ENCODE measurements at regions of chrX and their contacts with region 1.

Region 1: DNA sequence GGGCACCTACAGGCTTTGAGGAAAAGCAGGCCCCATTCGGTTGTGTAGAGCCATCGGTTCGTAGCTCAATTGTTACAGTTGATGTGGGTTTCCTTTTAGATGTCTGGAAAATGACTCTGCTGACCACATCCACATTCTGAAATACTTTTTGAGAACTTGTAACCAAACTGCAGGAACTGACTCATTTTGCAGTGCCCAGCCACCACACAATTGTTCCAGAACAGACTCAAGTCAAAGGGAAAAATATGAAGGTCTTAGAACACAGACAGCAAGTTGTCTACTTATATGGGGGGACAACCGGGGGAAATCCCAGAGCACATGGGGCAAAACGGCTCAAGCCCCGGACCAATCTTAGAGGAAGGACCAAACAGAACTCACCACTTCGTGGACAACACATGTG is 557.6 kb upstream of the DIPK2B start:
- DNase-seq: peak in 13 of 35 experiments; percentile 1 to 56 (median 14)
- ATAC-seq: peak; percentile 13 to 53 (median 46)
- H3K4me3 ChIP-seq: peak overlapping the region in 1 of 2 donors; percentile 10
- H3K4me3 Mint-ChIP-seq: peak overlapping the region; percentile 48 to 81 (median 54)
- H3K27ac ChIP-seq: peak overlapping the region; percentile 84
- H3K27ac Mint-ChIP-seq: peak overlapping the region; percentile 80 to 97
- H3K4me1 ChIP-seq: peaks cover 24 to 42% of the 10 kb centered on the region in 2 experiments
- H3K4me1 Mint-ChIP-seq: peaks cover 54 to 77% (median 59%) of the 10 kb centered on the region in 3 donors
- H3K27me3 ChIP-seq: no peaks in the 10 kb centered on the region
- H3K27me3 Mint-ChIP-seq: peaks cover 0 to 7% of the 10 kb centered on the region in 2 donors

Region 2: GRCh38 chrX:43860646-43861370 is 1897.5 kb before region 1 on chrX:
- CTCF ChIA-PET with region 1: no interaction called
- POLR2A ChIA-PET with region 1: no interaction called
- DNase-seq: no peak
- ATAC-seq: no peak
- H3K4me3 ChIP-seq: no peak overlapping the region
- H3K4me3 Mint-ChIP-seq: no peak overlapping the region
- H3K27ac ChIP-seq: no peak overlapping the region
- H3K27ac Mint-ChIP-seq: no peak overlapping the region
- H3K4me1 ChIP-seq: no peaks in the 10 kb centered on the region
- H3K4me1 Mint-ChIP-seq: no peaks in the 10 kb centered on the region
- H3K27me3 ChIP-seq: no peaks in the 10 kb centered on the region
- H3K27me3 Mint-ChIP-seq: peaks cover 2 to 5% of the 10 kb centered on the region in 2 donors

Region 3: GRCh38 chrX:45598861-45599260 is 159.5 kb before region 1 on chrX:
- CTCF ChIA-PET with region 1: no interaction called
- POLR2A ChIA-PET with region 1: interaction called in 1 of 2 experiments, 10 read pairs
- DNase-seq: no peak
- ATAC-seq: no peak
- H3K4me3 ChIP-seq: no peak overlapping the region
- H3K4me3 Mint-ChIP-seq: no peak overlapping the region
- H3K27ac ChIP-seq: no peak overlapping the region
- H3K27ac Mint-ChIP-seq: no peak overlapping the region
- H3K4me1 ChIP-seq: no peaks in the 10 kb centered on the region
- H3K4me1 Mint-ChIP-seq: no peaks in the 10 kb centered on the region
- H3K27me3 ChIP-seq: no peaks in the 10 kb centered on the region
- H3K27me3 Mint-ChIP-seq: peaks cover 0 to 26% of the 10 kb centered on the region in 2 donors

Region 4: GRCh38 chrX:45719751-45720501 is 38.4 kb before region 1 on chrX:
- CTCF ChIA-PET with region 1: no interaction called
- POLR2A ChIA-PET with region 1: no interaction called
- DNase-seq: no peak
- ATAC-seq: no peak
- H3K4me3 ChIP-seq: no peak overlapping the region
- H3K4me3 Mint-ChIP-seq: no peak overlapping the region
- H3K27ac ChIP-seq: no peak overlapping the region
- H3K27ac Mint-ChIP-seq: no peak overlapping the region
- H3K4me1 ChIP-seq: peaks cover 0 to under 1% of the 10 kb centered on the region in 2 experiments
- H3K4me1 Mint-ChIP-seq: peaks cover 0 to 12% (median 8%) of the 10 kb centered on the region in 3 donors
- H3K27me3 ChIP-seq: no peaks in the 10 kb centered on the region
- H3K27me3 Mint-ChIP-seq: peaks cover 0 to 13% of the 10 kb centered on the region in 2 donors

Region 5: DNA sequence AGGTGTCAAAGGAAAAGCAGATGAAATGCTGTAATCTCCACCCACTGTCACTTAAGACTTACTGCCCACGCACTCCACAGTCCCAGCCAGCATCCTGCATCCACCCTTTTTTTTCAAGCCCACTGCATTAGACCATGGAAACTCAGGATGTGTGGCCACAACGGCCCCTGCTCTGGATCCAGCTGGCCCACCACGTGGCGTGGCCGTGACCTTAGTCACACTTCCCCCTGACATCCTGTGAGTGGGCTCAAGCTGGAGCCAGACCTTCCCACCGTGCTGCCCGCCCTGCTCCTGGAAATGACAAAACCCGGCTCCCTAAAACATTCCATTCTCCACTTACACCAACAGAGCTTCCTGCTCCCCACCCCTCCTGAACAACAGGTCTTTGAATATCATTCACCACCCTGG is 30.6 kb after region 1 on chrX:
- CTCF ChIA-PET with region 1: no interaction called
- POLR2A ChIA-PET with region 1: no interaction called
- DNase-seq: no peak
- ATAC-seq: no peak
- H3K4me3 ChIP-seq: no peak overlapping the region
- H3K4me3 Mint-ChIP-seq: no peak overlapping the region
- H3K27ac ChIP-seq: no peak overlapping the region
- H3K27ac Mint-ChIP-seq: peak overlapping the region in 1 of 2 donors; percentile 29
- H3K4me1 ChIP-seq: peaks cover 0 to 3% of the 10 kb centered on the region in 2 experiments
- H3K4me1 Mint-ChIP-seq: peaks cover 14 to 36% (median 21%) of the 10 kb centered on the region in 3 donors
- H3K27me3 ChIP-seq: no peaks in the 10 kb centered on the region
- H3K27me3 Mint-ChIP-seq: peaks cover 0 to 12% of the 10 kb centered on the region in 2 donors

Measured in T-cell (primary cell).